Activated naive CD4-positive, alpha-beta T cell treated with anti-CD3 and anti-CD28 coated beads for 36 hours (primary cell): ENCODE measurements at regions of chrX and their contacts with region 1.

Region 1: DNA sequence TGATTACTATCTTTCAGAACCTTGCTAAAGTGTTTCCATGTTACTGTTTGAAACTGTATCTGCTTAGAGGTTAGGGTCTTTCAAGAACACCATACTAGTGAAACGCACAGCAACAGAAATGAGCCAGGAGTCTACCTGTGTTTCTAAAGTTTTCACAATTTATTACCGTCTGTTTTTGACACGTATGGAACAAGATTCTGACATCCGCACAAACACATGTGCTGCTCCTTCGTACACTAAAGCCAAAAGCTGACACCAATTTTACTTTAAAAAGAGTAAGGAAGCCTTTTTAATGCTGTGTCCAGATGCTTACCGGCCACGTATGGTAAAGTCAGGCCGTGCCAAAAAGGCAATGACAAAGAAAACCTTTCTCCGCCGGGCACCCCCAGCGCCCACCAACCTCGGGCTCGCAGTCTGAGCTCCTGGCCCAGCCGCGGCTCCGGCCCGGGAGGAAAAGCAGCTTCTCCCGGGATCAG is 532 bp downstream of the RPS4X start:
- DNase-seq: no peak
- H3K4me3 Mint-ChIP-seq: peak overlapping the region; percentile 80
- H3K27ac Mint-ChIP-seq: peak overlapping the region; percentile 89
- H3K4me1 Mint-ChIP-seq: peaks cover 37% of the 10 kb centered on the region
- H3K27me3 Mint-ChIP-seq: no peaks in the 10 kb centered on the region

Region 2: DNA sequence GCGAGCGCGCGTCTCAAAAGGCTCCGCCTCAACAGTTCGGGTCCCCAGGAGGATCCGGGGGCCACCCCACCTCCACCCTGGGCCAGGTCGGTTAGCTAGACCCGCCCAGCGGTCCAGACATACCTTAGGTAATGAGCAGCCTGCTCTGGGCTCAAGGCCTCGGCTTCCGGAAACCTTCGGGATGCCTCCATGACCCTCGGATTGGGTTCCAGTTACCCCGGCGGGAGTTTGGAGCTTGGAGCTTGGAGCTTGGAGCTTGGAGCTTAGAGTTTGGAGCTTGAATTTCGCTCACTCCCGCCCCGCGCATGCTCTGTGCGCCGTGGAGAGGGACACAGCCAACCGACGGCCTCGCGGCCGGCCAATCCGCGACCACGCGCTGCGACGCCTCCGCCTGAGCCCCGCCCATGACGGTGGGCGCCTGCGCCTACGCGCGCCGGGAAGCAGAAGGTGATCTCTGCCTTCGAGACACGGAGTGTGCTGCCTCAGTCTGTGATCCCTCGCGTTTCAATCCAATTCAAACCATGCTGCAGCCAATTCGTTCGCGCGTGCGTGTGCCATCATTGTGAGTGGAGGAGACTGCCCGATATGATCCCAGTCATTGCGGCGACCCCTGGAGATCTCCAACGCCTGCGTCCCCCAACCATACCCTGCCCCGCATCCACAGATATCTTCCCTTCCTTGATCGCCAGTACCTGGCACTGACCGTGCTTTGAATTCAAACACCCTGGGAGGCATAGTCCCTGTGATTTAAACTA is 37.6 kb before region 1 on chrX and contains the start of gene ERCC6L:
- CTCF ChIA-PET with region 1: no interaction called
- intact Hi-C with region 1: loop called (anchors 1 kb)
- DNase-seq: peak; percentile 88
- H3K4me3 Mint-ChIP-seq: peak within 1 kb of the TSS; percentile 79
- H3K27ac Mint-ChIP-seq: peak within 1 kb of the TSS; percentile 74
- H3K4me1 Mint-ChIP-seq: peaks cover 13% of the 10 kb centered on the region
- H3K27me3 Mint-ChIP-seq: no peaks in the 10 kb centered on the region
- total RNA-seq, gene ERCC6L: 9.5 to 9.6 TPM

Region 3: DNA sequence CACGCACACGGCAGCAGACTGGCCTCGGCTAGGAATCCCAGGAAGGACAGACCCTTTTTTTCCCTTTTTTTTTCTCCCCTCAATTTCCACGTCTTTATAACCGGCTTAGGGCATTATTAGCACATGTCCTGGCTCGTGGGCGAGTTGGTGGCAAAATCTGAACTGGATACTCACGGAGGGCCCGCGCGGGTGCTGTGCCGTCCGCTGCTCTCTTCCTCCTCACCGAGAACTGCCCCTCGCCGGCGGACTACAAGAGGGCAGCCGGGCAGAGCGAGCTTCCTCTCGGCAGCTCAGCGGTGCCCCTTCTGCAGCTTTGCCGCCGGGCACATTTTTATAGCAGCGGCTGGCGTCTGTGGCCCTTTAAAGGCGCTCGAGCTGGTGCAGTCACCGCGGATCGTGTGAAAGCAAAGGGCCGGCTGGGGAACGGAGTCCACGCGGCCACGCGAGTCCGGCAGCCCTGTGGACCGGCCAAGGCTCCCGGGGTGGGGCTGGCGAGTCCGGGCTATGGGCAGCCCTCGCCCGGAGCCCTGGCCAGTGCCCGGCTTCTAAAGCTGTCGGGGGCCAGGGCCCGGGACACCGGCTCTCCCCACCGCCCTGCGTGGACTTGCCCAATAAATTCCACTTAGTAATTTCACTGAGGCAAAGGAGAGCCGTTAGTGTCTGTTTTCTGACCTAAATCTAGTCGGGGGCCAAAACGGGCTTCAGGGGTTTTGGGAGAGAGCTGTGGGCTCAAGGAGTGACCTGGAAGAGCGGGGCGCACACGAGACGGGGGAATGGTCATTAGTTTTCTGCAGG is 30.5 kb after region 1 on chrX:
- CTCF ChIA-PET with region 1: no interaction called
- intact Hi-C with region 1: loop called (anchors 1 kb)
- DNase-seq: peak; percentile 8
- H3K4me3 Mint-ChIP-seq: peak overlapping the region; percentile 68
- H3K27ac Mint-ChIP-seq: no peak overlapping the region
- H3K4me1 Mint-ChIP-seq: peaks cover 20% of the 10 kb centered on the region
- H3K27me3 Mint-ChIP-seq: peaks cover 50% of the 10 kb centered on the region

Region 4: DNA sequence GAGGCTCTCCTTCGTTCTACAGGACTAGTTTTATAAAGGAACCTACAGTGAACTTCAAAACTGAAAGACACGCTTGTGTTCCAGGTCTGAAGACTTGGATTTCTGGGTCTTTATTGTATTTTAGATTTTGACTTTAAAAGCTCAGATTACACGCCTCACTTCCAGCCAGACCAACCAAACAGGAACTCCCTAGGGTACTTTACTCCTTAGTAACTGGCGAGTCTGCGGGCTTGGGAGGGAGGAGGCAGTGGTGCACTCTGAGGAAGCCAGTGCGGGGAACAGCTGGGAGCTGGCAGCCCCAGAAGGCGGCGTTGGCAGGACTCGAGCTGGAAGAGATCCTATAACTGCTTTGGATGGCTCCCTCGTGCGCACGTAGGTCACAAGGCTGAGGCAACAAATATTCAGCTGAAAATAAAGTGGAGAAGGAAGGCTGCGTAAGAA is 438.0 kb after region 1 on chrX:
- CTCF ChIA-PET with region 1: no interaction called
- intact Hi-C with region 1: loop called (anchors 1 kb)
- DNase-seq: peak; percentile 4
- H3K4me3 Mint-ChIP-seq: peak overlapping the region; percentile 67
- H3K27ac Mint-ChIP-seq: peak overlapping the region; percentile 41
- H3K4me1 Mint-ChIP-seq: peaks cover 6% of the 10 kb centered on the region
- H3K27me3 Mint-ChIP-seq: peaks cover 4% of the 10 kb centered on the region